Activated B cell treated with CpG ODN at 0.5 μM for 24 hours (primary cell): ENCODE measurements at regions of chr2 and their contacts with region 1.

Region 1: GRCh38 chr2:43105586-43106558 is 120.5 kb downstream of the ZFP36L2 start:
- DNase-seq: no peak
- ATAC-seq: peak; percentile 67
- H3K4me3 Mint-ChIP-seq: peak overlapping the region; percentile 60
- H3K27ac Mint-ChIP-seq: peak overlapping the region; percentile 85
- H3K4me1 Mint-ChIP-seq: peaks cover 65% of the 10 kb centered on the region
- H3K27me3 Mint-ChIP-seq: no peaks in the 10 kb centered on the region
- CTCF ChIP-seq: no peak

Region 2: DNA sequence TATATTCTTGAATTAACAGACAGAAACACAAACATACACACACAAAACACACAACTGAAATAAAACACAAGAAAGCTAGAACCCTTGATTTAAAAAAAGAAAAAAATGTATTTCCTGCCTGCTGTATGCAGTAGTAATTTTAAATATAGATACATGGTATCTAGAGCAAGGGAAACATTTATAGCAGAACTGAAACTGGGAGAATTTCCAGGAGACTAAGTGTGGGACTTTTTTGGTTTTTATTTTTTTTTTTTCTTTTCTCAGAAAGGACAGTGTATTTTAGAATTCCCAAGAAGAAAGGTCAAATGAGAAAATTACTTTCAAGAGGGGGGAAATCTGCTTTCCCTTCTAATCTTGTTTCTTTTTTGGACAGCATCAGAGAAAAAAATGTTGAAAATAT is 1617.0 kb before region 1 on chr2:
- CTCF ChIA-PET with region 1: no interaction called
- POLR2A ChIA-PET with region 1: no interaction called
- intact Hi-C with region 1: no loop called
- DNase-seq: no peak
- ATAC-seq: no peak
- H3K4me3 Mint-ChIP-seq: no peak overlapping the region
- H3K27ac Mint-ChIP-seq: no peak overlapping the region
- H3K4me1 Mint-ChIP-seq: no peaks in the 10 kb centered on the region
- H3K27me3 Mint-ChIP-seq: no peaks in the 10 kb centered on the region
- CTCF ChIP-seq: no peak

Region 3: GRCh38 chr2:42754021-42754775 is 351.7 kb before region 1 on chr2:
- CTCF ChIA-PET with region 1: no interaction called
- POLR2A ChIA-PET with region 1: interaction called, 10 read pairs
- intact Hi-C with region 1: no loop called
- DNase-seq: peak; percentile 49
- ATAC-seq: peak; percentile 72
- H3K4me3 Mint-ChIP-seq: peak overlapping the region; percentile 39
- H3K27ac Mint-ChIP-seq: peak overlapping the region; percentile 75
- H3K4me1 Mint-ChIP-seq: peaks cover 47% of the 10 kb centered on the region
- H3K27me3 Mint-ChIP-seq: no peaks in the 10 kb centered on the region
- CTCF ChIP-seq: no peak

Region 4: GRCh38 chr2:42917425-42917927 is 188.4 kb before region 1 on chr2:
- CTCF ChIA-PET with region 1: no interaction called
- POLR2A ChIA-PET with region 1: no interaction called
- intact Hi-C with region 1: no loop called
- DNase-seq: no peak
- ATAC-seq: no peak
- H3K4me3 Mint-ChIP-seq: no peak overlapping the region
- H3K27ac Mint-ChIP-seq: no peak overlapping the region
- H3K4me1 Mint-ChIP-seq: peaks cover 3% of the 10 kb centered on the region
- H3K27me3 Mint-ChIP-seq: peaks cover 3% of the 10 kb centered on the region
- CTCF ChIP-seq: no peak

Region 5: DNA sequence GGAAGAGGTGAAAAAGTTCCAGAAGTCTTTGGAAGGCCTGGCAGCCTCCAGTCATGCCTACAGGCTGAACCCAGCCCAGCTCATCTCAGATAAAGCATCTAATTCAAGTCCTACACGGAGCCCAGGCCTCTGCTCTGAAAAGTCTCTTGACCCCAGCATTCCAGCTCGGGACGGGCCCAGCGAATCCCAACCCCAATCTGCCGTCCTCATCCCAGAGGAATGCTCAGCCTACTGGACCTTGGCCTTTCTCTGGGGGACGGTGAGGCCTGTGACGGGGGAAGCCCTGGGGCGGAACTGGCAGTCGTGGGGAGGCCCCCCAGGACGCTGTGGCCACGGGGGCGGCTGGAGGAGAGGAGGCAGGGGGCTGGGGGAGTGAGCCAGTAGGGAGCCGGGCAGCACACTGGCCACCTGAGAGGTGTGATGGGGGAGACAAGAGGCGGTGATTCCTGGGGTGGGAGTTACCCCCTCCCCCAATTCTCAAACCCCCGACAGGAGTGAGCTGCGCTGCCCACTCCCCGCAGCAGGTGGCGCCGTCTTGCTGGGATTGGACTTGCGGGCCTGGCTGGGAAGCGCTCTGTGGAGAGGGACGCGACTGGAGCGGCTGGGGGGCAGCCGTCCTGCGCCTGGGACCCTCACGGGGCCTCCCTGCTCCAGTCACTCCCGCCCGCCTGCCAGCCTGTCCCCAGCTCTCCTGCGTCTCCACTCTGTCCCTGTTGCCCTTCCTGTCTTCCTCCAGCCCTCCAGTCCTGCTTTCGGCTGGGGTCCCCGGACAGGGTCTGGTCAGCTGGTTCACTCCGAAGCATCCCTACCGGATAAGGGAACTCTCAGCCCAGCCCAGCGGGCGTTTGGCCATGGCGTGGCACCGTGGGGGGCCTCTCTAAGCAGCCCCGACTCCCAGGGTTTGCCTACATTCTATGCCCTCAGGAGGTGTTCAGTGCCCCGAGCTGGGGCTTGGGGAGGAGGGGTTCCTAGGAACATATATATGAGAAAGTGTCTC is 130.9 kb before region 1 on chr2:
- CTCF ChIA-PET with region 1: no interaction called
- POLR2A ChIA-PET with region 1: no interaction called
- intact Hi-C with region 1: loop called (anchors 5 kb)
- DNase-seq: peak; percentile 54
- ATAC-seq: peak; percentile 76
- H3K4me3 Mint-ChIP-seq: no peak overlapping the region
- H3K27ac Mint-ChIP-seq: no peak overlapping the region
- H3K4me1 Mint-ChIP-seq: peaks cover 35% of the 10 kb centered on the region
- H3K27me3 Mint-ChIP-seq: peaks cover 3% of the 10 kb centered on the region
- CTCF ChIP-seq: no peak

Region 6: DNA sequence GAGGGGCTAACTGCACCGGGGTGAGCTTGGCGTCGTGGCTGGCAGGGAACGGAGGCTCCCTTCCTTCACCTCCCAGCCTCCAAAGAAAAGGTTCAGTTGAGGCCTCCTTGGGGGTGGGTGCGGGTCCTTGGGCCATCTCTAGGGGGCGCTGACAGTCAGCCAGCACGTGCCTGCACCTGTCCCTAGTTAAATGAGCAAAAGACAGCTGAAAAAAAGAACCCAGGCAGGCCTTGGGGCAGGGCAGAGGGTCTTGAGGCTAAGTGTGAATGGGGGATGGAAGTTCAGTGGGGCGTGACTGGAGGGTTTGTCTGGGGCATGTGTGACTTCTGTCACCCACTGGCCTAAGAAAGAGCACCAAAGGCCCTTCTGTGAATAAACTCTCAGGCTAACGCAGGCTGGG is 64.1 kb after region 1 on chr2:
- CTCF ChIA-PET with region 1: no interaction called
- POLR2A ChIA-PET with region 1: interaction called, 4 read pairs
- intact Hi-C with region 1: loop called (anchors 2 kb)
- DNase-seq: peak; percentile 43
- ATAC-seq: no peak
- H3K4me3 Mint-ChIP-seq: peak overlapping the region; percentile 79
- H3K27ac Mint-ChIP-seq: peak overlapping the region; percentile 98
- H3K4me1 Mint-ChIP-seq: peaks cover 82% of the 10 kb centered on the region
- H3K27me3 Mint-ChIP-seq: no peaks in the 10 kb centered on the region
- CTCF ChIP-seq: no peak

Region 7: GRCh38 chr2:43293744-43294695 is 188.1 kb after region 1 on chr2:
- CTCF ChIA-PET with region 1: no interaction called
- POLR2A ChIA-PET with region 1: no interaction called
- intact Hi-C with region 1: loop called (anchors 5 kb)
- DNase-seq: no peak
- ATAC-seq: peak; percentile 94
- H3K4me3 Mint-ChIP-seq: no peak overlapping the region
- H3K27ac Mint-ChIP-seq: peak overlapping the region; percentile 92
- H3K4me1 Mint-ChIP-seq: peaks cover 18% of the 10 kb centered on the region
- H3K27me3 Mint-ChIP-seq: no peaks in the 10 kb centered on the region
- CTCF ChIP-seq: no peak

Region 8: GRCh38 chr2:44952143-44952805 is 1846.4 kb after region 1 on chr2:
- CTCF ChIA-PET with region 1: no interaction called
- POLR2A ChIA-PET with region 1: no interaction called
- intact Hi-C with region 1: no loop called
- DNase-seq: no peak
- ATAC-seq: peak; percentile 59
- H3K4me3 Mint-ChIP-seq: peak overlapping the region; percentile 62
- H3K27ac Mint-ChIP-seq: no peak overlapping the region
- H3K4me1 Mint-ChIP-seq: peaks cover 48% of the 10 kb centered on the region
- H3K27me3 Mint-ChIP-seq: peaks cover 80% of the 10 kb centered on the region
- CTCF ChIP-seq: no peak